ENCODE measurements at regions of chr13 and their contacts with region 1.

Region 1: GRCh38 chr13:37047032-37047431 is 12.5 kb downstream of the SUPT20H start:
- DNase-seq: no peak
- H3K4me3 Mint-ChIP-seq: no peak overlapping the region
- H3K27ac Mint-ChIP-seq: no peak overlapping the region
- H3K4me1 Mint-ChIP-seq: peaks cover 15% of the 10 kb centered on the region
- H3K27me3 Mint-ChIP-seq: no peaks in the 10 kb centered on the region

Region 2: DNA sequence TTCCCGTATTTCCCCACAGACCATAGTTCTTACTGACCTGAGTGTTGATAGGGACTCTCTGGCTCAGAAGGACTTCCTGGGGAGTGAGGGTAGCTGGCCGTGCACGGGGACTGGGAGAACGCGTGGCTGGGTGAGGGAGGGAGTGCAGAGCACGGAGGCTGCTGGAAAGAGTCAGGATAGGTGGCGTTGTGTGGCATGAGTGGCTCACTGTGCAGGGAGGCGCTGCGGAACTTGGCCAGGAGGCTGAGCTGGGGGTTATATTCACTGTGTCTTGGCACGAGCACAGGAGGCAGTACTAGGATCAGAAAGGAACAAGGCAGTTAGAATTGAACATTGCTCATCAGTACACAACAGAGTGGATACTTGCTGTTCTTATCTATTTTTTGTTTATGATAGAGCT is 174.4 kb before region 1 on chr13:
- CTCF ChIA-PET with region 1: no interaction called
- intact Hi-C with region 1: no loop called
- DNase-seq: no peak
- H3K4me3 Mint-ChIP-seq: no peak overlapping the region
- H3K27ac Mint-ChIP-seq: no peak overlapping the region
- H3K4me1 Mint-ChIP-seq: no peaks in the 10 kb centered on the region
- H3K27me3 Mint-ChIP-seq: peaks cover 14% of the 10 kb centered on the region

Region 3: GRCh38 chr13:37023871-37024270 is 23.2 kb before region 1 on chr13:
- CTCF ChIA-PET with region 1: no interaction called
- intact Hi-C with region 1: loop called (anchors 2 kb)
- DNase-seq: no peak
- H3K4me3 Mint-ChIP-seq: no peak overlapping the region
- H3K27ac Mint-ChIP-seq: no peak overlapping the region
- H3K4me1 Mint-ChIP-seq: peaks cover 2% of the 10 kb centered on the region
- H3K27me3 Mint-ChIP-seq: no peaks in the 10 kb centered on the region